Left cardiac atrium (tissue), 4 donors: ENCODE measurements at regions of chr7 and their contacts with region 1.

Region 1: DNA sequence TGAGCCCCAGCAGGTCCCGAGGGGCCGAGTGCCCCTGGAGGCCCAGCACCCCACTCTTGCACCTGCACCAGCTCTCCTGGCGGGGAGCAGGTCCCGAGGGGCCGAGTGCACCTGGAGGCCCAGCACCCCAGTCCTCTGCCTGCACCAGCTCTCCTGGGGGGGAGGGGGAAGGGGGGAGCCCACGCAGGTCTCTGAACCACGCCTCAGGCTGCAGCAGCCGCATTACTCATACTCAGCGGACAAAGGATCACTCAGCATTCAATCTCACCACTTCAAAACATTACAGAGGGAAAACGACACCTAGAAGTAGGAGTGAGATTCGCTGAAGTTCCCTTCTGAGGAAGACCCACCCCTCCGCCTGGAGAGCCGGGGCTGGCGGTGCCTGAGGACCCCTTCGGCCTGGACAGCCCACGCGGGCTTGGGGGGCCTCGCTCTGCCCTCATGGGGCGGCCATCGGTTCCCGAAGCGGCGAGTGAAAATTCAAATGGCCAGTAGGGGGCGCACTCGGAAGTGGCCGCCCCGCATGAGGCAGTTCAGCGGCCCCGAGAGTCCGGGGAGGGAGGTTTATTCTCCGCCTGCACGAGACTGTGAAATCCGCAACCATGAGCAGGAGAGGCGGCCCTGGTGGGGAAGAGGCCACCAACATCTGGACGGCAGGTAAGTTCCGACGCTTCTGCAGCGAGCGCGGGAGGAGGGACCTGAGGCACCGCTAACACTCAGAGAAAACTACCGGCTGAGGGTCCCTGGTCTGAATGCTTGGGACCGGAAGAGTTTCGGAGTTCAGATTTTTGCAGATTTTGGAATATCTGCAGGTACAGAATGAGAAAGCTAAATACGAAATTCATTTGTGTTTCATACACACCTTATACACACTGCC is 1.1 kb upstream of the GPER1 start:
- DNase-seq: peak; percentile 74
- ATAC-seq: peak; percentile 74 to 76

Region 2: DNA sequence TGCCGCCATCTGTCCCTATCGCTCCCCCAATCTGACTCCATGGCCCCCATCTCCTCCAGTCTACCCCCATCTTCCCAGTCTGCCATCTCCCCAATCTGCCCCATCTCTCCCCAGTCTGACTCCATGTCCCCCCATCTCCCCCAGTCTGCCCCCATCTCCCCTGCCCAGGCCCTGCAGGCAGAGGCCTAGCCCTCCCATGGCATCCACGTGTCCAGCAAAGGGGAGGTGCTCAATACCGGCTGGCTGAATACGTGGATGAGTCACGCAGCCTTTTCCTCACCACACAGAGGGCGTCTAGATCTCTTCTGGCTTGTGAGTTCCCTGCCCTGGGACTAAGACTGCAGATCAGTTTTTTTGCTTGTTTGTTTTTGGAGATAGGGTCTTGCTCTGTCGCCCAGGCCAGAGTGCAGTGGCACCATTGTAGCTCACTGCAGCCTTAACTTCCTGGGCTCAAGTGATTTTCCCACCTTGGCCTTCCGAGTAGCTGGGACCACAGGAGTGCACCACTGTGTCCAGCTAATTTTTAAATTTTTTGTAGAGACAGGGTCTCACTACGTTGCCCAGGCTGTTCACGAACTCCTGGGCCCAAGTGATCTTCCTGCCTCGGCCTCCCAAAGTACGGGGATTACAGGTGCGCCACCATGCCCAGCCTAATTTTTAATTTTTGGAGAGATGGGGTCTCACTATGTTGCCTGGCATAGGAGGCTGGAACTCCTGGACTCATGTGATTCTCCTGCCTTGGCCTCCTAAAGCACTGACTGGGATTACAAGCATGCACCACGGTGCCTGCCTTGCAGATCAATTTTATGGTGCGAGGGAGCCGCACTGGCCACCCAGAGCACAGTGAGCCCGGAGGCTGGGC is 57.8 kb before region 1 on chr7:
- intact Hi-C with region 1: no loop called
- DNase-seq: peak; percentile 89
- ATAC-seq: peak; percentile 88 to 95

Region 3: GRCh38 chr7:1123715-1124114 is 36.9 kb after region 1 on chr7:
- intact Hi-C with region 1: loop called in 1 of 2 experiments (anchors 5 kb)
- DNase-seq: peak; percentile 92
- ATAC-seq: peak; percentile 92 to 95

Region 4: GRCh38 chr7:1144269-1144771 is 57.5 kb after region 1 on chr7:
- intact Hi-C with region 1: loop called in 1 of 2 experiments (anchors 5 kb)
- DNase-seq: peak; percentile 57
- ATAC-seq: peak; percentile 90 to 96

Region 5: DNA sequence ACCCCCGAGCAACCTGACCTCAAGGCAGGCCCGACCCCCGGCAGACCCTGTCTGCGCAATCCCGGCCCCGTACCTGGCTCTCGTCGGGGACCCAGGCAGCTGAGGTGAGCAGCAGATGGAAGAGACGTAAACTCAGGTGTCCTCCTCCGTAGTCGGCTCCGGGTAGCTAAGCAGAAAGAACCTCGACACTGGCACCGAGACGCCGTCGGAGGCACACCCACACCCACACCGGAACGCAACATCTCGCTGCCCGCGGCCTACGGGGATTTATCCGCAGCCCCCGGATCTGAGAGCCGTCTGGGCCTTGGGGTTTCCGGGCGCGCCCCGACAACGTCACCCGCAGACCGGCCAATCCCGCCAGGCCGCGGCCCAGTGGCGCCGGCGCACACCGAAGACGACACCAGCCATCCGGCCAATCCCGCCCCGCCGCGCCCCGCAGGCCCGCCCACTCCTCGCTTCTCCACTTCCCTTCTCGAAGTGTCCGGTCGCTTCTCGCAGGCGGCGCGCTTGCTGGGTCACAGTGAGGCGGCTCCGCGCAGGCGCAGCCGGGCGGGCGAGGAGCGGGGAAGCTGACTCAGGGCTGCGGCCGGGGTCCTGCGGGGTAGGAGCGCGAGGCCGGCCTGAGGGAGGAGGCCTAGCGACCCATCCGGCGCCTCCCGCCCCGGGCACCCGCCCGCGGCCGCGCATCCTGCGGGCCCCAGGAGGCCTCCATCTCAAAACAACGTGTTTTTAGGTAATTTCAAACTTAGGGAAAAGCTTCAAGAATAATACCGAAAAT is 73.3 kb after region 1 on chr7 and contains the start of gene ZFAND2A:
- intact Hi-C with region 1: loop called in 1 of 2 experiments (anchors 10 kb)
- DNase-seq: peak; percentile 99
- ATAC-seq: peak; percentile 99 to 100
- total RNA-seq, gene ZFAND2A: 9.8 to 16.7 TPM